ENCODE measurements at regions of chr12 and their contacts with region 1.

Region 1: GRCh38 chr12:92784795-92785562 is 82.2 kb downstream of the PLEKHG7 start:
- DNase-seq: peak; percentile 45
- H3K4me3 Mint-ChIP-seq: no peak overlapping the region
- H3K27ac Mint-ChIP-seq: no peak overlapping the region
- H3K4me1 Mint-ChIP-seq: peaks cover 15% of the 10 kb centered on the region
- H3K27me3 Mint-ChIP-seq: no peaks in the 10 kb centered on the region
- CTCF ChIP-seq: peak; percentile 66

Region 2: DNA sequence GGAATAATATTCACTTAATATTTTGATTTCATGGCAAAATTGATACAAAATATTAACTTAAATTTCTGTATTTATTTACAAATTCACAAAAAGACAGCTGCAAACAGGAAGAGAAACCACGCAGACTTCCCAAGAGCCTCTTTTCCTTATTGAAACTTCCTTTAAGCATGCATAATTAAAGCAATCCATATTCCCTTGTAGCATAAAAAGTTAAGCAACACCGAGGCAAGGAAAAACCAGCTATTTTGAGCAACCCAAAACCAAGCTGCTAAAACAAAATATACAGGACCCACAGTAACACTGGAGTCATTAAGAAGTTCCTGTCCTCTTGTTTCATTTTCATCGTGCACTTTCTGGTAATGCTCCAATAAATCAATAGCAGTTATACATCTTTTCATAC is 86.1 kb after region 1 on chr12:
- CTCF ChIA-PET with region 1: no interaction called
- intact Hi-C with region 1: no loop called
- DNase-seq: no peak
- H3K4me3 Mint-ChIP-seq: no peak overlapping the region
- H3K27ac Mint-ChIP-seq: no peak overlapping the region
- H3K4me1 Mint-ChIP-seq: no peaks in the 10 kb centered on the region
- H3K27me3 Mint-ChIP-seq: no peaks in the 10 kb centered on the region
- CTCF ChIP-seq: no peak

Region 3: DNA sequence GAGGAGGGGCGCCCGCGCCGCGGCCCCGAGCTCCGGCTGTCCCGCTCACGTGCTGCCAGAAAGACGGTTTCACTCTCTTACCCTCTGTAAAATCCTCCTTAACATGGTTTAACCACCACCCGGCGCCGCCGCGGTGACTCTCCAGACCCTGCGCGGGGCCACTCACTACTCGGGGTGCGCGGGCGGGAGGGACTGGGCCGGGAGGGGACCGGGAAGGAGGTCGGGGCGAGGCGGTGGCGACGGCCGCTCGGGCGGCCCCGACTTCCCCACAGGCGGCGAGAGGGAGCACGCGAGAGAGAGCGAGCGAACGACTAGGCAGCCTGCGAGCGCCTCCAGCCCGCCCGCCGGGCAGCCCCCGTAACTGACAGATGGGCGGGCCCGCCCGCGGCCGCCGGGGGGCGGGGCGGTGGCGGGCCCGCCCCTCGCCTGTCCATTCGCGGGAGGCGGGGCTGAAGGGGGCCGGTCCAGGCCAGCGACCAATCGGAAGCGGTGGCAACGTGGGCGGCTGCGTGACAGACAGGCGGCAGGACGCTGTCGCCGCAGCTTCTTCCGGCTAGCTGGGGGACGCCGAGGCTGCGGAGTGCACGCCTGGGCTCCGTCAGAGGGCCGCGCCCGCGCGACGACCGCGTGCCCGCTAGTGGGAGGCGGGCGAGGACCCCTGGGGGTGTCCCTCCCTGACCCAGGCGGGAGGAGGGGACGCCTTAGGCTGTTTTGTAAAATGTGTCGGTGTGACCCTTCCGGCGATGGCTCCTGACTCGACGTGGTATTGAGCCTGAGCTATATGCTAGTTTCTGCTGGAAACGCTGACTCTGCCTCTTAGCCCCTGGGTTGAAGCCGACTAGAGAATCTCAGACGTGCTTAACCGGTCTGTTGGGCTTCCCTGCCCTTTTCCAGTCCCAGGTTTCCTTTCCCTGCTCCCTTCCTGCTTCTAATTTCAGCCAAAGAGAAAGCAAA is 144.3 kb after region 1 on chr12 and contains the start of gene EEA1:
- CTCF ChIA-PET with region 1: no interaction called
- intact Hi-C with region 1: loop called (anchors 5 kb)
- DNase-seq: peak; percentile 98
- H3K4me3 Mint-ChIP-seq: peak within 1 kb of the TSS; percentile 78
- H3K27ac Mint-ChIP-seq: peak within 1 kb of the TSS; percentile 95
- H3K4me1 Mint-ChIP-seq: peaks cover 41% of the 10 kb centered on the region
- H3K27me3 Mint-ChIP-seq: no peaks in the 10 kb centered on the region
- CTCF ChIP-seq: no peak
- total RNA-seq, gene EEA1: 25.5 and 27.4 TPM in 2 replicates

Region 4: DNA sequence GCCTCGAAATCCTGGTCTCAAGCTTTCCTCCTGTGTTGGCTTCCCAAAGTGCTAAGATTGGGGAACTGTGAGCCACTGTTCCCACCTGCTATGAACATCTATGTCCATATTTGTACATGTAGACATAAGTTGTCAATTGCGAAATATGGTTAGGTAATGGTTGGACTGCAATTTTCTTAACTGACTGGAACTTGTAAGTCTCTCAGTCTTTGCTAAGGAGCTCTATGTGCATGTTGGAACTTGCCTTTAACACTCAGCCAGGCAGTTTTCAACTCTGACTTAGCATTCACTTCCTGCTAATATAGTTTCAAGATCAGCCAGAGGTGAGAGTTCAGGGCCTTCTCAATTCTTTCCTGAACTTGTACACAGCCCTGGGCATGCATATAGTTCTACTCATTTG is 188.6 kb after region 1 on chr12:
- CTCF ChIA-PET with region 1: no interaction called
- intact Hi-C with region 1: loop called (anchors 5 kb)
- DNase-seq: no peak
- H3K4me3 Mint-ChIP-seq: no peak overlapping the region
- H3K27ac Mint-ChIP-seq: no peak overlapping the region
- H3K4me1 Mint-ChIP-seq: peaks cover 19% of the 10 kb centered on the region
- H3K27me3 Mint-ChIP-seq: no peaks in the 10 kb centered on the region
- CTCF ChIP-seq: no peak

Region 5: DNA sequence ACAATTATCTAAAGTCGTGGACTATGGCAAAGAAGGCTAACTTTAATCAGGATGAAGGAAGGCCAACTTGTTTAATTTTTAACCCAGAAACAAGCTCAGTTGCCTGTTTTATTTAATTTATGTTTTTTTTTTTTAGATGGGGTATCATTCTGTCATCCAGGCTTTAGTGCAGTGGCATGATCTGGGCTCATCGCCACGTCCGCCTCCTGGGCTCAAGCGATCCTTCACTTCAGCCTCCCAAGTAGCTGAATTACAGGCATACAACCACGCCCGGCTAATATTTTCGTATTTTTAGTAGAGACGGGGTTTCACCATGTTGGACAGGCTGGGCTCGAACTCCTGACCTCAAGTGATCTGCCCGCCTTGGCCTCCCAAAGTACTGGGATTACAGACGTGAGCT is 612.4 kb after region 1 on chr12:
- CTCF ChIA-PET with region 1: no interaction called
- intact Hi-C with region 1: loop called (anchors 2 kb)
- DNase-seq: no peak
- H3K4me3 Mint-ChIP-seq: no peak overlapping the region
- H3K27ac Mint-ChIP-seq: no peak overlapping the region
- H3K4me1 Mint-ChIP-seq: no peaks in the 10 kb centered on the region
- H3K27me3 Mint-ChIP-seq: no peaks in the 10 kb centered on the region
- CTCF ChIP-seq: no peak

Region 6: DNA sequence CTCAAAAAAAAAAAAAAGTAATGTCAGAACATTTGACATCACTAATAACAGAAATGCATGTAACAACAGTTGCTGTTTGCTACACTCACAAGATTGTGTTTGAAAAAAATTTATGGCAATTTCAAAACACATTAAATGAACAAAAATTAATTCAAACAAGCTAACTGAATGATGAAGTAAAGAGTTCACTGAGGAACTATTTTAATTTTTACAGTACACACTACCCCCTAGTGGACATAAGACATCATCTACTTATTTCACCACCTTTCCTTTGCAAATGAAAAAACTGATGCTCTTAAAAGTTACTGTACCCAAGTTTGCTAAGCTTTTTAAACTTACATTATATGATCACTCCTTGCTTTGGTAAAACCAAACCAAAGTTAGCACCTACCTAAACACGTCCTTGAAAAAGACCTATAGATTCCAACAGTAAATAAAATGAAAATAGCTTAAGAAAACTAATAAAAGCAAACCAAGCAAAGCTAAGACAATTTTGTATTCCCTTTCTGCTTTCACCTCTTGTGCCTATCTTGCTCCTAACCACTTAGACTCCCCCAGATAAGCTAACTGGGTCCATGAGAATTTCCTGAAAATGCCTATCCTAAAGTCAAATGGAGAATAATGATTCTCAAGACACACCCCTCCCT is 634.5 kb after region 1 on chr12:
- CTCF ChIA-PET with region 1: interaction called, 3 read pairs
- intact Hi-C with region 1: loop called (anchors 1 kb)
- DNase-seq: no peak
- H3K4me3 Mint-ChIP-seq: no peak overlapping the region
- H3K27ac Mint-ChIP-seq: peak overlapping the region; percentile 27
- H3K4me1 Mint-ChIP-seq: peaks cover 44% of the 10 kb centered on the region
- H3K27me3 Mint-ChIP-seq: no peaks in the 10 kb centered on the region
- CTCF ChIP-seq: peak; percentile 35

Measured in Calu3 (cell line).